ENCODE measurements at regions of chrX and their contacts with region 1.

Region 1: GRCh38 chrX:13506574-13506973 is 62.8 kb upstream of the EGFL6 start:
- DNase-seq: peak; percentile 65
- H3K4me3 Mint-ChIP-seq: no peak overlapping the region
- H3K27ac Mint-ChIP-seq: no peak overlapping the region
- H3K4me1 Mint-ChIP-seq: no peaks in the 10 kb centered on the region
- H3K27me3 Mint-ChIP-seq: peaks cover 45% of the 10 kb centered on the region
- CTCF ChIP-seq: peak; percentile 81

Region 2: DNA sequence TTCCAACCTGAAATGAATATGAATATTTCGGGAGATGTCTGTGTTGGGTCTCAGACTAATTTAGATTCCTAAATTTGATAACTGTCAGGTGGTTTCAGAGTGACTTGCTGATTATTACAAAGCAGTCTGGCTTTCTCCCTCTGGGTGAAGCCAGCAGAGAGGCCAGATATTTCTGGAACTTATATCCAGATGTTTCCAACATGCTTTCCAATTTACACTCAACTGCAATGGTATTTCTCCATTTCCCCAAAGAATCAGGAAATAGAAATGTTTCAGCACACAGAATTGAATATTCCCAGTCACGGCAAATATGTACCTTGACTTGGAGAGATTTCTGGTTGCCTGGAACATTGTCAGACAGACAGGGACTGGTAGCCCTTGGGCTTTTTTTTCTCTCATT is 14.4 kb after region 1 on chrX:
- CTCF ChIA-PET with region 1: interaction called, 22 read pairs
- POLR2A ChIA-PET with region 1: no interaction called
- intact Hi-C with region 1: no loop called
- DNase-seq: no peak
- H3K4me3 Mint-ChIP-seq: no peak overlapping the region
- H3K27ac Mint-ChIP-seq: no peak overlapping the region
- H3K4me1 Mint-ChIP-seq: no peaks in the 10 kb centered on the region
- H3K27me3 Mint-ChIP-seq: peaks cover 88% of the 10 kb centered on the region
- CTCF ChIP-seq: no peak

Region 3: DNA sequence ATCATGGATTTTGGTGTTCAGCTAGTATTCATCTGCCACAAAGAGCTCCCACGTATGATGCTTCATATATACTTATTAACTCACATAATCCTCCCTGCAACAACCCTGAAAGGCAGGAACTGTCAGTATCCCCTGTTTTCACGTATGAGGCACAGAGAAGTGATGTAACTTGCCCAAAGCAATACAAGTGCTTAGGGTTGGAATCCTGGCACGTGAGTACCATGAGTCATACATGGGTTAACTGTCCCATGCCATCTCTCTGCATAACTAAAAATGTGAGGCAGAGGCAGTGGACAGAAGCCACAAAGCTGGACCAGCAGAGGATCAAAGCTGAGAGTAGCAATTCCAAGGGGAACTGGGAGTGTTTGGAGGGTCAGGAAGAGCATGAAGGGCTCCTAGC is 27.2 kb after region 1 on chrX:
- CTCF ChIA-PET with region 1: interaction called, 38 read pairs
- POLR2A ChIA-PET with region 1: interaction called, 3 read pairs
- intact Hi-C with region 1: no loop called
- DNase-seq: peak; percentile 81
- H3K4me3 Mint-ChIP-seq: no peak overlapping the region
- H3K27ac Mint-ChIP-seq: no peak overlapping the region
- H3K4me1 Mint-ChIP-seq: peaks cover 6% of the 10 kb centered on the region
- H3K27me3 Mint-ChIP-seq: peaks cover 66% of the 10 kb centered on the region
- CTCF ChIP-seq: no peak

Region 4: GRCh38 chrX:13646154-13646549 is 139.6 kb after region 1 on chrX:
- CTCF ChIA-PET with region 1: interaction called, 185 read pairs
- POLR2A ChIA-PET with region 1: interaction called, 16 read pairs
- intact Hi-C with region 1: loop called (anchors 1 kb)
- DNase-seq: peak; percentile 77
- H3K4me3 Mint-ChIP-seq: no peak overlapping the region
- H3K27ac Mint-ChIP-seq: no peak overlapping the region
- H3K4me1 Mint-ChIP-seq: peaks cover 8% of the 10 kb centered on the region
- H3K27me3 Mint-ChIP-seq: peaks cover 55% of the 10 kb centered on the region
- CTCF ChIP-seq: peak; percentile 54

Region 5: DNA sequence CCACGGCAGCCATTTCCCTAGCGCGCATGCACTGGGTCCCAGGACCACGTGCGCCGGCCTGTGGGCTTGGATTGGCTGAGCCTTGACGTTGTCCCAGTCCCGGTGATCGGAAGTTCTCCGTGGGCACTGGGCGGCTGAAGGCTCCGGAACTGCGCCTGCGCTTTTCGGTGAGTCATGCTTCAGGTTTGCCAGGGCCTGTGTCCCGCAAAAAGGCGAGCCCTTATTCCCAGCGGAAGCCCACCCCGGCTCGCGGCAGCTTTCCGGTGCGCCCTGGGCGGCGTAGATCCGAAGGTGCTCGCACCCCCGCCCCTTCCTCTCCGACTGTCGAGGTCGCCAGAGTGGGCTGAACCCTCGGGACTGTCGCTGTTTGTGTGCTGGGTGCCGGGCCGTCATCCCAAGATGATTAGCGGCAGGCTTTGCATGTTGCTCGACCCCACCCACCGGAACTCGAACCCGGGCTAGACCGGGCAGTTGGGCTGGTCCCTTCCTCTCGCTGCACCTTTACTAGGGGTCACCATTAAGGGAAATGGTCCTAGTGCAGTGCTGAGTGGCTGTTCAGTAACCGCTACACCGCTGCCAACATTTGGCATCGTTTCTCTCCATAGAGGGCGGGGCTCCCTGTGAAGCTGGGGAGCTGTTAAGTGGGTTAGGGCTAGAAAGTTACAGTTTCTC is 146.6 kb after region 1 on chrX and contains the start of gene TCEANC:
- CTCF ChIA-PET with region 1: interaction called, 16 read pairs
- POLR2A ChIA-PET with region 1: interaction called, 5 read pairs
- intact Hi-C with region 1: no loop called
- DNase-seq: peak; percentile 98
- H3K4me3 Mint-ChIP-seq: peak within 1 kb of the TSS; percentile 89
- H3K27ac Mint-ChIP-seq: peak within 1 kb of the TSS; percentile 59
- H3K4me1 Mint-ChIP-seq: peaks cover 5% of the 10 kb centered on the region
- H3K27me3 Mint-ChIP-seq: peaks cover 20% of the 10 kb centered on the region
- CTCF ChIP-seq: no peak
- total RNA-seq, gene TCEANC: 4.0 TPM in 2 replicates

Region 6: GRCh38 chrX:13750204-13750603 is 243.6 kb after region 1 on chrX:
- CTCF ChIA-PET with region 1: interaction called, 14 read pairs
- POLR2A ChIA-PET with region 1: no interaction called
- intact Hi-C with region 1: loop called (anchors 1 kb)
- DNase-seq: peak; percentile 77
- H3K4me3 Mint-ChIP-seq: no peak overlapping the region
- H3K27ac Mint-ChIP-seq: no peak overlapping the region
- H3K4me1 Mint-ChIP-seq: peaks cover 6% of the 10 kb centered on the region
- H3K27me3 Mint-ChIP-seq: no peaks in the 10 kb centered on the region
- CTCF ChIP-seq: peak; percentile 62

Measured in MCF 10A (cell line).